ENCODE measurements at regions of chr10 and their contacts with region 1.

Region 1: DNA sequence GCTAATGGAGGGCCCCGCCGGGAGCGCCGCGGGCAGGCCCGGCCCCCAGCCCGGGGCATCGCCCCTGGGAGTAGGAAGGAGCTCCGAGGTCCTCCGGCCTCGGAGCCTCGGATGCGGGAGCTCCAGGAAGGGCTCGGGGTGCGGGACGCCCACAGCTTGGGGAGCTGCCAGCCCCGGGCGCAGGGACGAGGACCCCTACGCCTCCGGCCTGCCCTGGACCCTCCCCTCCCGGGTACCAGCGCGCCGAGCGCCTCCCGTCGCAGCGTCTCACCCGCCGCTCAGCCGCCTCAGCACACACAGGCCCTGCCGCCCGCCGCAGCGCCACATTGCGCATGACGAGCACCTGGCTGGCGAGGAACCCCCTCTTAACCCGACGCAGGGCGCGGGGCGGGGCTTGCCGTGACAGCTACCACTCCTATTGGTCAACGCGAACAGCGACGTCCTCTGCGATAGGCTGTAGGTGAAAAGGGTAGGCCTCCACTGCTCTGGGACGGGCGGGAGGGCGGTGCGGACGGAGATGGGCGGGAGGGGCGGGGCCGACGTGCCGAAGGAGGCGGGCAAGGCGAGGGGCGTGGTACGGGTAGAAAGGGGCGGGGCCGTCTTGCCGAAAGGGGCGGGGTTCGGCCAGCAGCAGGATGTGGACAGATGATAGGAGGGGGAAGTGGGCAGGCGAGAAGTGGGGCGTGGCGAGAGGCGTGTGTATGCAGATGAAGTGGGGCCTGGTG is at the start of gene PITRM1:
- DNase-seq: peak; percentile 99
- H3K4me3 Mint-ChIP-seq: peak within 1 kb of the TSS; percentile 87
- H3K27ac Mint-ChIP-seq: peak within 1 kb of the TSS; percentile 89
- H3K4me1 Mint-ChIP-seq: peaks cover 23% of the 10 kb centered on the region
- H3K27me3 Mint-ChIP-seq: no peaks in the 10 kb centered on the region
- total RNA-seq, gene PITRM1: 65.6 to 74.5 TPM

Region 2: DNA sequence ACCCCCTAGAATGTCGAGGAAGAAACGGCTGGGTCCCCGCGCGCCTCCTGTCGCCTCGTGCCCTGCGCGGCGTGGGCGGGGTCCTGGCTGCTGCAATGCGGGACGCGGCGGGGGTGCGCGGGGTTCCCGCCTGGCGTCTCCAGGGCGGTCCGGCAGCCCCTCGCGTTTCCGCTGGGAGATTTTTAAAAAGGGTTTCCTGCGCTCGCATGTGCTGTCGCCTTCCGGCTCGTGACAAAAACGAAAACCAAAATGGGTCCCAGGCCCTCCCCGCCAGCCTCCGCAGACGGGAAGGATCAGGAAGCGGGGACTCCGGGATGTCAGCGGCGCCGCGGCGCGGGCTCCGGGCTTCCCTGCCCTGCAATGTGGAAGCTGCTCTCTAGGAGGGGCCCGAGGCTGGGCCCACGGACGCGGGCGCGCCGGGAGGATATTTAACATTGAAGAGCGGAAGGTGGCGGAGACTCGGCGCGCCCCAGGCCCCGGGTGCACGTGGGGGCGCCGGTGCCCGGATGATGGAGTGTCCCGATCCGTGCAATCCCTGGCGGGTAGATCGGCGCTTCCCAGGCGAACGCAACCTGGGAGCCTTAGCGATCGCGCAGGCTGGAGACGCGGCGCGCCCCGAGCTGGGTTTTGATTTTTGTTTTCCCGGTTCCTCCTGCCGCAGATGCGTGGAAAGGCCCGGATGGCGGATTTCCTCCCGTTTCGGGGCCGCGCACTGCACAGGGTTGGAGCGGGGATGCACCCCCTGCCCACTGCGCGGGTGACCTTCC is 104.2 kb before region 1 on chr10:
- CTCF ChIA-PET with region 1: no interaction called
- intact Hi-C with region 1: loop called (anchors 1 kb)
- DNase-seq: peak; percentile 78
- H3K4me3 Mint-ChIP-seq: peak overlapping the region; percentile 86
- H3K27ac Mint-ChIP-seq: peak overlapping the region; percentile 82
- H3K4me1 Mint-ChIP-seq: peaks cover 41% of the 10 kb centered on the region
- H3K27me3 Mint-ChIP-seq: peaks cover 9% of the 10 kb centered on the region

Region 3: GRCh38 chr10:3217301-3217700 is 44.7 kb after region 1 on chr10:
- CTCF ChIA-PET with region 1: no interaction called
- intact Hi-C with region 1: no loop called
- DNase-seq: no peak
- H3K4me3 Mint-ChIP-seq: no peak overlapping the region
- H3K27ac Mint-ChIP-seq: no peak overlapping the region
- H3K4me1 Mint-ChIP-seq: no peaks in the 10 kb centered on the region
- H3K27me3 Mint-ChIP-seq: no peaks in the 10 kb centered on the region